Activated CD4-positive, alpha-beta T cell treated with anti-CD3 and anti-CD28 coated beads for 36 hours (primary cell): ENCODE measurements at regions of chr1 and their contacts with region 1.

Region 1: DNA sequence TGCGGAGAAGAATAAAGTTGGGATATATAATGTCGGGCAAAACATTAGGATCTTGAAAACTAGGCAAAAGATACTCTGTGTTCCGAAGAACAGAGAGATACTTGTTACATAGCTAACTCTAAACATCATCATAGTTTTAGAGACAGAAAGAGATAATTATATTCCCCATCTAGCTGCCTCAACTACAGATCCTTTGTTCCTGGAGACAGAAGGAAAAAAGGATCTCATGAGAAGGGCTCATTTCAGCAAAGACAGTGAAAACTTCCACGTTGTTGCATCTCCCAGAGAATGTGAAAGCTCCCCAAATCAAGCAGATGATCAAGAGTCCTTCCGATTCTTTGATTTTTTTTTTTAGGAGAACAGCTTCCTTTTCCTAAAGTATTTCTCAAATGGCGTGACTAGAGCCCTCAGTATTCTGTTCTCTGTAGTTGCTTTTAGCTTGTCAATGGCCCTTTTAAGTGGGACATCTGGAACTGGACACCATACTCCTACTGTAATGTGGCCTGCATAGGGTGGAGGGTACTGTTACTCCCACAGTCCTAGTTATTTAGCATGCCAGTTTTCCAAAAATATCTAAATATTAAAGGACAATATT is 1048.2 kb downstream of the TTLL7 start:
- DNase-seq: no peak
- ATAC-seq: no peak
- H3K4me3 Mint-ChIP-seq: no peak overlapping the region
- H3K27ac Mint-ChIP-seq: no peak overlapping the region
- H3K4me1 Mint-ChIP-seq: no peaks in the 10 kb centered on the region
- H3K27me3 Mint-ChIP-seq: no peaks in the 10 kb centered on the region

Region 2: GRCh38 chr1:82284213-82284612 is 666.5 kb before region 1 on chr1:
- CTCF ChIA-PET with region 1: no interaction called
- POLR2A ChIA-PET with region 1: no interaction called
- intact Hi-C with region 1: no loop called
- DNase-seq: no peak
- ATAC-seq: no peak
- H3K4me3 Mint-ChIP-seq: no peak overlapping the region
- H3K27ac Mint-ChIP-seq: no peak overlapping the region
- H3K4me1 Mint-ChIP-seq: no peaks in the 10 kb centered on the region
- H3K27me3 Mint-ChIP-seq: no peaks in the 10 kb centered on the region

Region 3: GRCh38 chr1:82762829-82763532 is 187.7 kb before region 1 on chr1:
- CTCF ChIA-PET with region 1: no interaction called
- POLR2A ChIA-PET with region 1: no interaction called
- intact Hi-C with region 1: loop called in 1 of 2 experiments (anchors 5 kb)
- DNase-seq: no peak
- ATAC-seq: no peak
- H3K4me3 Mint-ChIP-seq: no peak overlapping the region
- H3K27ac Mint-ChIP-seq: no peak overlapping the region
- H3K4me1 Mint-ChIP-seq: no peaks in the 10 kb centered on the region
- H3K27me3 Mint-ChIP-seq: no peaks in the 10 kb centered on the region

Region 4: DNA sequence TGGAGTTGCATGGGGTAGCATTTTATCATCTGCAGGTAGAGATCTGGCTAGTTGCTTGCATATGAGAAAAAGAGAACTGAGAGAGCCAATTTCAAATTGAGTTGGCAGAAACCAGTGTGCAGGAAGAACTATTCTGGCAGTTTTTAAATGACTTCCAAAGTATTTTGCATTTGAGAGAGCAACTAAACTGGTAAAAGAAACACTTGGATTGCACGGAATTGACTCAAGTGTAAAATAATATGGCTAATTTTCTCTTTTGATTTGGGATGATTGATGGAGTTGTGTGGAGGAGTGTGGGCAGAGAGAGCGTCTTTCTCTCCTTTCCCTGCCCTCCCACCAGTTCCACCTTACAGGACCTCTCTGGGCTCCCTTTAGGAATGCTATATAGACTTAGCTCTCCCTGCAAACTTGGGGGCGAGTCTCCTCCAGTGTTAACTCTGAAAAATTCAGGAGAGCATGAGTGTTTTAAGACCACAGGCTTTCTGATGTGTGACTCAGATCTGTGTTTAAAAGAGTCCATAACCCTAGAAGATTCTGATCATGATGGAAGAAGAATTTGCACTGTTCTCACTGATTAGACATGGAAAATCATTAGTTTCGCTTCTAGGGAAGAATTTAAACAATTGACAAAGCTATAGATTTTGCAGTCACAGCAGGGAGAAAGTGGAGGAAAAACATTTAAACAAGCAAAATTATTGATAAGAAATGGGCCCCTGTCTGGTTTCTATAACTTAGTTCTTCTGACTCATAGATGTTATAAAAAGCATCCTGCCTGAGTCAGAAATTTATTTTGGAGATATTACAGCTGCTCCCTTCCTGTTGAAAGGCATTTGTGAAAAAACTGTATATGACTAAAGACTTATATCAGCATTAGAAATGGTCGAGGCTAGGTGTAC is 1648.4 kb after region 1 on chr1:
- CTCF ChIA-PET with region 1: no interaction called
- POLR2A ChIA-PET with region 1: no interaction called
- intact Hi-C with region 1: no loop called
- DNase-seq: no peak
- ATAC-seq: peak; percentile 88
- H3K4me3 Mint-ChIP-seq: peak overlapping the region; percentile 30
- H3K27ac Mint-ChIP-seq: peak overlapping the region; percentile 86
- H3K4me1 Mint-ChIP-seq: peaks cover 32% of the 10 kb centered on the region
- H3K27me3 Mint-ChIP-seq: no peaks in the 10 kb centered on the region